ENCODE measurements at regions of chr6 and their contacts with region 1.

Region 1: DNA sequence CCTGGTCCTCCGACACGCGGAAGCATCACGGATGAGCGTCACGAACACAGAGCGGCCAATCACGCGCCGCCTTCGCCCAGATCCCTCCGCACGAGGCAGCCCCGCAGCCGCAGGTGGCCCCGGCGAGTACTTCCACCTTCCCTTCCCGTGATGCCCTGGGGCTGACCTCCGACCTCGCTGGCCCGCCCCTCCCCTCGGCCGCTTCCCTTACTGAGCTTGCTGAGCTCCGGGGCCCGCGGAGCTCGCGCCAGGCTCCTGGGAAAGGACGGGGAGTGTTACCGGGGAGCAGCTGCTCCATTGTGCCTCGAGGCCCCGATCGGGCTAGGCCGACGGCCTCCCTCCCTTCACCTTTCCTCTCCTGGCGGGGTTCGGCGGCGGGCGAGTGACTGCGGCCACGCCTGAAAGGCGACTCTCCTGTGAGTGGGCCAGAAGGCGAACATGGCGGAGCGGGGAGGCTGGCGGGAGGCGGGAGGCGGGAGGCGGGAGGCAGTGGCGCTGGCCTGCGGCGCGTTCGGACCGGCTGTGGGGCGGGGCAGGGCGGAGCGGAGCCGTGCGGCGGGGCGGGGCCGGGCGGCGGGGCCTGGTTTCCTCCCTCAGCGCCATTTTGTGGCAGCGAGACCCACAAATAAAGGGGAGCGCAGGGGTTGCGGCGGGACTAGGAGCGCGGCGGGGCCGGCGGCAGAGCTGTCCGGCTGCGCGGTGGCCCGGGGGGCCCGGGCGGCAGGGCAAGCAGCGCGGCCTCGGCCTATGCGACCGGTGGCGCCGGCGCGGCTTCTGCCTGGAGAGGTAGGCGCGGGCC is at the start of gene WTAP:
- DNase-seq: peak; percentile 96 to 98 (median 97)
- H3K4me3 ChIP-seq: peak within 1 kb of the TSS; percentile 39 to 78
- H3K4me3 Mint-ChIP-seq: peak within 1 kb of the TSS; percentile 91 to 96 (median 95)
- H3K27ac ChIP-seq: peak within 1 kb of the TSS; percentile 97
- H3K27ac Mint-ChIP-seq: peak within 1 kb of the TSS; percentile 99
- H3K4me1 ChIP-seq: peaks cover 65% of the 10 kb centered on the region
- H3K4me1 Mint-ChIP-seq: peaks cover 30 to 74% (median 52%) of the 10 kb centered on the region in 4 donors
- H3K27me3 ChIP-seq: no peaks in the 10 kb centered on the region
- H3K27me3 Mint-ChIP-seq: no peaks in the 10 kb centered on the region
- total RNA-seq, gene WTAP: 151 to 159 TPM

Region 2: DNA sequence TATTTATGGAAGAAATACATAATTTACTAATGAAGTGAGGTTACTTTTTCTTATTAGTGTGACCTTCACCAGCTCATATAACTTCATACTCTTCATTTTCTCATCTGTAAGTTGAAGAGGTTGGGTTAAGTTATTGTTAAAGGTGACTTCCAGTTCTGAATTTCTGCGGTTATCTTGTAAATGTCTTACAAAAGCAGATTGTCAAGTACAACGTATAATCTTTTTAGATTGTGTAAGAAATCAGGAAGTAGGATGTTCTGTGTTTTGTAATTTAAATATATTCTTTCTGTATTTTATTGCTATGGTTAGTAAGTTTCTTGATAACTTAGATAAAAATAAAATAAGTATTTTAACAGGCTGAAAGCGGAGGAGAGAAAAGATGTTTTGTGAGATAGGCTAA is 12.2 kb after region 1 on chr6:
- CTCF ChIA-PET with region 1: no interaction called
- POLR2A ChIA-PET with region 1: interaction called, 14 read pairs
- intact Hi-C with region 1: no loop called
- DNase-seq: no peak
- H3K4me3 ChIP-seq: no peak overlapping the region
- H3K4me3 Mint-ChIP-seq: no peak overlapping the region
- H3K27ac ChIP-seq: no peak overlapping the region
- H3K27ac Mint-ChIP-seq: peak overlapping the region in 1 of 7 donors; percentile 24
- H3K4me1 ChIP-seq: peaks cover 45% of the 10 kb centered on the region
- H3K4me1 Mint-ChIP-seq: peaks cover 21 to 39% (median 32%) of the 10 kb centered on the region in 4 donors
- H3K27me3 ChIP-seq: no peaks in the 10 kb centered on the region
- H3K27me3 Mint-ChIP-seq: no peaks in the 10 kb centered on the region

Region 3: GRCh38 chr6:159761873-159762680 is 35.0 kb after region 1 on chr6 and contains the start of gene ACAT2:
- CTCF ChIA-PET with region 1: interaction called, 4 read pairs
- POLR2A ChIA-PET with region 1: interaction called, 114 read pairs
- intact Hi-C with region 1: loop called (anchors 1 kb)
- DNase-seq: peak; percentile 90 to 93 (median 93)
- H3K4me3 ChIP-seq: peak within 1 kb of the TSS; percentile 87 to 99
- H3K4me3 Mint-ChIP-seq: peak within 1 kb of the TSS; percentile 94 to 99 (median 96)
- H3K27ac ChIP-seq: peak within 1 kb of the TSS; percentile 94
- H3K27ac Mint-ChIP-seq: peak within 1 kb of the TSS; percentile 93 to 98 (median 98)
- H3K4me1 ChIP-seq: peaks cover 16% of the 10 kb centered on the region
- H3K4me1 Mint-ChIP-seq: peaks cover 23 to 33% (median 28%) of the 10 kb centered on the region in 4 donors
- H3K27me3 ChIP-seq: no peaks in the 10 kb centered on the region
- H3K27me3 Mint-ChIP-seq: no peaks in the 10 kb centered on the region
- total RNA-seq, gene ACAT2: 30.5 to 30.9 TPM

Region 4: DNA sequence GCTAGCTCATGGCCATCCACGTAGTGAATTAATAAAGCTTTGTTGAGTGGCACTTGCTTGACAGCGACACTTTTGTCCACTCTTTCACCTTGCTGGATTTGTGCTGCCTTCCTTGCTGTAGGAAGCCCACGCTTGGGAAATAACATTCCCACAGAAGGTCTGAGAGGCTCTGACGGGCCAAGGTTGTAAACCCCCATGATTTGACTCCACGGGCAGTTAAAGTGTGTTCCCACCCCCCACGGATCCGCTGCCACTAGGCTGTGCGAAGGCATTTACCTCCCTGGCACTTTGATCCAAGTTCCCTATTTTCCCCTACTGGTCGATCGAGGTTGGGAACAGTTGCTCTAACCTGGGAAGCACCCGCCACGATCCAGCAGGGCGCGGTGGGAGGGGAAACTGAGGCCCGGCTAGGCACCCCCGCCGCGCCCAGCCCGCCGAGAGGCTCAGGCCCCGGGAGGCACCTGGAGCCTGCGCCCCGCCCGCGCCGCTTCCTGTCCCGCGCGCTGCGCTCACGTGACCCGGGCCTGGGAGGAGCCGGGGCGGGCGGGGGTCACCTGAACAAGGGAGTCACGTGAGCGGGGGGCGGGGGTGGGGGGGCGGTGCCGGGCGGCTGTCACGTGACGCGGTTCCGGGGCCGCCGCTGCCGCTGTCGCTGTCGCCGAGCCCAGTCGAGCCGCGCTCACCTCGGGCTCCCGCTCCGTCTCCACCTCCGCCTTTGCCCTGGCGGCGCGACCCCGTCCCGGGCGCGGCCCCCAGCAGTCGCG is 241.5 kb after region 1 on chr6 and contains the start of gene IGF2R:
- CTCF ChIA-PET with region 1: no interaction called
- POLR2A ChIA-PET with region 1: interaction called, 20 read pairs
- intact Hi-C with region 1: loop called (anchors 1 kb)
- DNase-seq: peak; percentile 91 to 94 (median 92)
- H3K4me3 ChIP-seq: peak within 1 kb of the TSS; percentile 61 to 62
- H3K4me3 Mint-ChIP-seq: peak within 1 kb of the TSS; percentile 88 to 96 (median 94)
- H3K27ac ChIP-seq: peak within 1 kb of the TSS; percentile 75
- H3K27ac Mint-ChIP-seq: peak within 1 kb of the TSS; percentile 92 to 97 (median 94)
- H3K4me1 ChIP-seq: peaks cover 44% of the 10 kb centered on the region
- H3K4me1 Mint-ChIP-seq: peaks cover 29 to 45% (median 38%) of the 10 kb centered on the region in 4 donors
- H3K27me3 ChIP-seq: no peaks in the 10 kb centered on the region
- H3K27me3 Mint-ChIP-seq: no peaks in the 10 kb centered on the region
- total RNA-seq, gene IGF2R: 77.5 to 79.2 TPM

Region 5: GRCh38 chr6:159979136-159979874 is 252.2 kb after region 1 on chr6:
- CTCF ChIA-PET with region 1: no interaction called
- POLR2A ChIA-PET with region 1: interaction called, 10 read pairs
- intact Hi-C with region 1: no loop called
- DNase-seq: peak in 2 of 5 donors; percentile 18 to 72
- H3K4me3 ChIP-seq: no peak overlapping the region
- H3K4me3 Mint-ChIP-seq: peak overlapping the region in 7 of 8 donors; percentile 32 to 87 (median 66)
- H3K27ac ChIP-seq: peak overlapping the region; percentile 60
- H3K27ac Mint-ChIP-seq: peak overlapping the region; percentile 84 to 96 (median 88)
- H3K4me1 ChIP-seq: peaks cover 93% of the 10 kb centered on the region
- H3K4me1 Mint-ChIP-seq: peaks cover 76 to 96% (median 85%) of the 10 kb centered on the region in 4 donors
- H3K27me3 ChIP-seq: no peaks in the 10 kb centered on the region
- H3K27me3 Mint-ChIP-seq: no peaks in the 10 kb centered on the region

Region 6: DNA sequence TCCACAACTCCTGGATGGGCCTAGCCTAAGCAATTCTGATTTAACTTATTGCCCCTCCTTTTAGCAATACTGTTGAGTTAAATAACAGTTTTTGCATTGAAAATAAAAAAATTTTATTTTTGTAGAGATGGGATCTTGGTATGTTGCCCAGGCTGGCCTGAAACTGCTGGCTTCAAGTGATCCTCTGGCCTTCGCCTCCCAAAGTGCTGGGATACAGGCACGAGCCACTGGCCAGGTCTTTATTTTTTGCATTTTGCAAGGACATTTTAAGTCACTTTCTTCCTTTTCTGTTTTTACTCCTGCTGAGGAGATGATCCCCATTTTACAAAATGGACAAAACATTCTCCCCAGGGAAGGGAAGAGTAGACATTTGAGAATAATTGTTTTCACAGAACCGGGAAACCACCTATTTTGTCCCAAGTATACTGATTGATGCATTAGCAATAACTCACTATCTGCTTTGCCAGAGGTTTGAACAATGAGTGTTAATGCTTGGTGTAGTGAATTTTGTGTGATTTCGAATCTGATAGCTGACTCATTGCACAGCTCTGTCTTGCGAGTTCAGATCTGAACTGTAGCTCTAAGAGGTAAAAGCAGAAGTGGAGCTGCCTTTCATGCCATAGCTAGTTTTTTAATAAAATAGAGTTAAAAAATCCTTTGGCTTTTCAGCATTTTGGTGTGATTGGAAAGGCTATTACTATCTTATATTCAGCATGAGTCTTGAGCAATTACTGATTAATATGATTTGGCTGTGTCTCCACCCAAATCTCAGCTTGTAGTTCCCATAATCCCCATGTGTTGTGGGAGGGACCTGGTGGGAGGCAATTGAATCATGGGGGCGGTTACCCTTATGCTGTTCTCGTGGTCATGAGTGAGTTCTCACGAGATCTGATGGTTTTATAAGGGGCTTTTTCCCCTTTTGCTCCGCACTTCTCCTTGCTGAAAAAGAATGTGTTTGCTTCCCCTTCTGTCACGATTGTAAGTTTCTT is 262.7 kb after region 1 on chr6:
- CTCF ChIA-PET with region 1: no interaction called
- POLR2A ChIA-PET with region 1: no interaction called
- intact Hi-C with region 1: no loop called
- DNase-seq: no peak
- H3K4me3 ChIP-seq: no peak overlapping the region
- H3K4me3 Mint-ChIP-seq: peak overlapping the region in 1 of 8 donors; percentile 20
- H3K27ac ChIP-seq: no peak overlapping the region
- H3K27ac Mint-ChIP-seq: peak overlapping the region in 1 of 7 donors; percentile 25
- H3K4me1 ChIP-seq: peaks cover 60% of the 10 kb centered on the region
- H3K4me1 Mint-ChIP-seq: peaks cover 52 to 89% (median 72%) of the 10 kb centered on the region in 4 donors
- H3K27me3 ChIP-seq: no peaks in the 10 kb centered on the region
- H3K27me3 Mint-ChIP-seq: no peaks in the 10 kb centered on the region

Measured in CD4-positive, alpha-beta memory T cell (primary cell).